Activated naive CD4-positive, alpha-beta T cell treated with anti-CD3 and anti-CD28 coated beads for 36 hours (primary cell): ENCODE measurements at regions of chr3 and their contacts with region 1.

Region 1: DNA sequence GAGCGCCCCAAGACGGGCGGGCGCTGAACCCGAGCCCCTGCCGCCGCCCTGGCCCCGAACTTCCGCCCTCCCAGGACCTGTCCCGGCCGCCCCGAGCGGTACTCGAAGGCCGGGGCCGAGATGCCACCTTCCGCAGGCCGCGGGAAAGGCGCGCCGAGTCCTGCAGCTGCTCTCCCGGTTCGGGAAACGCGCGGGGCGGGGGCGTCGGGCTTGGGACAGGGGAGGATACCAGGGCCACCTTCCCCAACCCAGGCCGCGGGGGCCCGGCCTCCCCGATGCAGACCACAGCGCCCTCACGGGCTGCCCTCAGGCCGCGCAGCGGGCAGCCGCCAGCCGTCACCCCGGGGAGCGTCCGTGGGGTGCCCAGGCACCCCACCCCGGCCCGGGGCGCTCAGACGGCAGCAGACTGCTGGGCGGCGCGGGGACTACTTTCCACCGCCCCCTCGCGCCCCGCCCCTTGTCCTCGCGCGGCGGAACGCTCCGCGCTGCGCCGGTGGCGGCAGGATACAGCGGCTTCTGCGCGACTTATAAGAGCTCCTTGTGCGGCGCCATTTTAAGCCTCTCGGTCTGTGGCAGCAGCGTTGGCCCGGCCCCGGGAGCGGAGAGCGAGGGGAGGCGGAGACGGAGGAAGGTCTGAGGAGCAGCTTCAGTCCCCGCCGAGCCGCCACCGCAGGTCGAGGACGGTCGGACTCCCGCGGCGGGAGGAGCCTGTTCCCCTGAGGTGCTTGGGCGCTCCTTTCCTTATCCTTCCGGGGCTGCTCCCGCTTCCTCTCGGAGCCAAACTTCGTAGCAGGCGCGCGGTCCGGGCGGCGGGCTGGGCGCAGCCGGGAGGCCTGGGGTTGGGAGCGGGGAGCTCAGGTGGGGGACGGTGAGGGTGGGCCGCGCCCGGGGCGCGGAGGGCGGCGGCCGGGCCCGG is at the start of gene CTNNB1:
- DNase-seq: peak; percentile 87
- H3K4me3 Mint-ChIP-seq: peak within 1 kb of the TSS; percentile 90
- H3K27ac Mint-ChIP-seq: peak within 1 kb of the TSS; percentile 92
- H3K4me1 Mint-ChIP-seq: peaks cover 28% of the 10 kb centered on the region
- H3K27me3 Mint-ChIP-seq: peaks cover 3% of the 10 kb centered on the region
- total RNA-seq, gene CTNNB1: 106 to 115 TPM

Region 2: DNA sequence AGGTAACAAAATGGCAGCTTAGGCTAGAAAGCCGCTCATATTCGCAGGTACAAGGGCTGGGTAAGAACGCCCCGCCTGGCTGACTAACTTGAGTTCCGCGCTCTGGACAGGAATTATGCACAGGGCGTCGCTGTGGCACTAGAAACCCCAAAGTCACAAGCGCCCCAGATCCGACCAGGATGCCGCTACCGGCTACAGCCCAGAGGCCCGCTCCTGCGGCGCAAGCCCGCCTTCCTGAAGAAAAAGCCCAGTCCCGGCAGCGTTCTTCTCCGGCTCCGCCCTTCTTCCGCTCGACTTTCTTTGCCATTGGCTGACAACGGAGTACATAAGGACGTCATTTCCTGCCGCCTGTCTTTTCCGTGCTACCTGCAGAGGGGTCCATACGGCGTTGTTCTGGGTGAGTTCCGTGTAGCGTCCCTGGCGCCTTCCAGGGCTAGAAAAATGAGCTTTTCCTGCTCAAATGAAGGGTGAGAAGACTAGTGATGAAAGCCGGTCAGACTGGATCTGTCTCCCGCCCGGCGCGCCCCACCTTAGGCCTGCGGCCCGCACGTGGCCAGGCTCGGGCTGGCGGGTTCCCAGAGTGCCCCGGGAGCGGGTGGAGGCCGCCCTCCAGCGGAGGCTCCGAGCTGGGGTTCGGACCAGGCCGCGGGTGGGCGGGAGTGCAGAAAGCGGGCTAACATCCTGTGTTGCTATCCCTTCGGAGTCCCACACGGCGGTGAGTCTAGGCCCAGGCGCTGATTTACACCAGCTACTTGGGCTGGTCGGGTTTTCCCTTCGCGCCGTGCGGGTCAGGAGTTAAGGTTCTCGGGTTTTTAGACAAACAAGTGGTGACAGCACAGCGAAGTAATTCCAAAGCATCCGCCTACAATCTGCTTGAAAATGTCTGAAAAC is 1792.6 kb before region 1 on chr3 and contains the start of gene RPSA:
- CTCF ChIA-PET with region 1: no interaction called
- intact Hi-C with region 1: loop called (anchors 2 kb)
- DNase-seq: peak; percentile 98
- H3K4me3 Mint-ChIP-seq: peak within 1 kb of the TSS; percentile 94
- H3K27ac Mint-ChIP-seq: peak within 1 kb of the TSS; percentile 96
- H3K4me1 Mint-ChIP-seq: peaks cover 41% of the 10 kb centered on the region
- H3K27me3 Mint-ChIP-seq: no peaks in the 10 kb centered on the region
- total RNA-seq, gene RPSA: 3,309 to 3,414 TPM

Region 3: DNA sequence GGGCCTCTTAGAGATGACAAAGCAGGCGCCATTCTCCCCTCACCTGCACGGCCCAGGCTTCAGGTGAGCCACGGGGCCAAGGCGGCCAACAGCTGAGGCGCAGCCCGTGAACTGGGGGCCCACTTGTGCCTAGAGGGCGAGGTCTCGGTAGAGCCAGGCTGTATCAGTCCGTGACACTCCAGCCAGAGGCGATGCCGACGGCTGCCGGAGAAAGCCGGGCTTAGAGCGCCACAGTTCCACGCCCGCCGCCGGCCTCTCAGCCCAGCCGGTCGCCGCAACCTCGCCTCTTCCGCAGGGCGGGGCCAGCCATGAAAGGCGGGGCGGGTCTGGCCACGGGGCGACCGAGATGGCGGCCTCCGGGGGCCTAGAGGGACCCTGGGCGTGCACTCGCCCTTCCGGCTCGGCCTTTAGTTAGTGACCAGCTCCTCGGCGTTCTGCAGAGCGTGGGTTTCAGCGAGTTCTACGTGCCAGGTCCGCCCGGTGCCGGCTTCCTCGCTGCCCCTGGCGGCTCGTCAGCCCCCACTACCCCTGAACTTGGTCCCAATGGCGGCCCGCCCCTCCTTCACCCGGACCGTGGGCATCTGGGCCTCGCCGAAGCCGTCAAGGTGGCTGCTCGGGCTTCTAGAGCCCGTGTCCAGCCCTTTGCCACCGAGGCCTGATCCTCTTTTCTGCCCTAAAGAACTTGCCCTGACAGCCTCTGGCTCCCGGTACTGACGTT is 674.5 kb before region 1 on chr3 and contains the start of gene ZNF621:
- CTCF ChIA-PET with region 1: no interaction called
- intact Hi-C with region 1: loop called (anchors 2 kb)
- DNase-seq: peak; percentile 82
- H3K4me3 Mint-ChIP-seq: peak within 1 kb of the TSS; percentile 92
- H3K27ac Mint-ChIP-seq: peak within 1 kb of the TSS; percentile 85
- H3K4me1 Mint-ChIP-seq: peaks cover 11% of the 10 kb centered on the region
- H3K27me3 Mint-ChIP-seq: no peaks in the 10 kb centered on the region
- total RNA-seq, gene ZNF621: 16.4 to 17.7 TPM

Region 4: GRCh38 chr3:41026394-41027177 is 172.6 kb before region 1 on chr3:
- CTCF ChIA-PET with region 1: no interaction called
- intact Hi-C with region 1: no loop called
- DNase-seq: no peak
- H3K4me3 Mint-ChIP-seq: no peak overlapping the region
- H3K27ac Mint-ChIP-seq: no peak overlapping the region
- H3K4me1 Mint-ChIP-seq: no peaks in the 10 kb centered on the region
- H3K27me3 Mint-ChIP-seq: no peaks in the 10 kb centered on the region

Region 5: GRCh38 chr3:41117398-41117870 is 81.8 kb before region 1 on chr3:
- CTCF ChIA-PET with region 1: no interaction called
- intact Hi-C with region 1: loop called (anchors 1 kb)
- DNase-seq: peak; percentile 94
- H3K4me3 Mint-ChIP-seq: peak overlapping the region; percentile 17
- H3K27ac Mint-ChIP-seq: peak overlapping the region; percentile 73
- H3K4me1 Mint-ChIP-seq: peaks cover 26% of the 10 kb centered on the region
- H3K27me3 Mint-ChIP-seq: no peaks in the 10 kb centered on the region

Region 6: GRCh38 chr3:41600616-41601015 is 401.4 kb after region 1 on chr3:
- CTCF ChIA-PET with region 1: no interaction called
- intact Hi-C with region 1: loop called (anchors 10 kb)
- DNase-seq: no peak
- H3K4me3 Mint-ChIP-seq: no peak overlapping the region
- H3K27ac Mint-ChIP-seq: no peak overlapping the region
- H3K4me1 Mint-ChIP-seq: no peaks in the 10 kb centered on the region
- H3K27me3 Mint-ChIP-seq: no peaks in the 10 kb centered on the region

Region 7: GRCh38 chr3:42387802-42388651 is 1188.8 kb after region 1 on chr3:
- CTCF ChIA-PET with region 1: no interaction called
- intact Hi-C with region 1: loop called (anchors 10 kb)
- DNase-seq: peak; percentile 75
- H3K4me3 Mint-ChIP-seq: peak overlapping the region; percentile 44
- H3K27ac Mint-ChIP-seq: peak overlapping the region; percentile 96
- H3K4me1 Mint-ChIP-seq: peaks cover 25% of the 10 kb centered on the region
- H3K27me3 Mint-ChIP-seq: no peaks in the 10 kb centered on the region